ENCODE measurements at regions of chr11 and their contacts with region 1.

Region 1: GRCh38 chr11:86218125-86219084 is 26.1 kb upstream of the EED start:
- DNase-seq: peak; percentile 61
- H3K4me3 ChIP-seq: peak overlapping the region; percentile 29
- H3K27ac ChIP-seq: no peak overlapping the region
- H3K27me3 ChIP-seq: no peaks in the 10 kb centered on the region
- CTCF ChIP-seq: peak; percentile 97

Region 2: GRCh38 chr11:86041975-86042378 is 176.4 kb before region 1 on chr11:
- in situ Hi-C with region 1: loop called (anchors 25 kb)
- DNase-seq: peak; percentile 91
- H3K4me3 ChIP-seq: no peak overlapping the region
- H3K27ac ChIP-seq: peak overlapping the region; percentile 7
- H3K27me3 ChIP-seq: no peaks in the 10 kb centered on the region
- CTCF ChIP-seq: peak; percentile 78

Measured in brain microvascular endothelial cell (primary cell).